H1 (cell line): ENCODE measurements at regions of chr6 and their contacts with region 1.

Region 1: GRCh38 chr6:16409531-16410441 is 171.4 kb downstream of the GMPR start:
- DNase-seq: peak; percentile 21 to 75
- H3K4me3 ChIP-seq: no peak overlapping the region
- H3K27ac ChIP-seq: no peak overlapping the region
- H3K4me1 ChIP-seq: peaks cover 0 to 2% (median 0%) of the 10 kb centered on the region in 4 experiments; a peak in 2 of 7 replicates
- H3K27me3 ChIP-seq: no peaks in the 10 kb centered on the region
- CTCF ChIP-seq: peak; percentile 80 to 89 (median 84)
- EP300 ChIP-seq: no peak
- POLR2A ChIP-seq: no peak
- RAD21 ChIP-seq: peak; percentile 65 to 74

Region 2: GRCh38 chr6:16420715-16421461 is 11.1 kb after region 1 on chr6:
- CTCF ChIA-PET with region 1: interaction called, 24 read pairs
- POLR2A ChIA-PET with region 1: no interaction called
- DNase-seq: no peak
- H3K4me3 ChIP-seq: no peak overlapping the region
- H3K27ac ChIP-seq: no peak overlapping the region
- H3K4me1 ChIP-seq: peaks cover 0 to 7% (median 2%) of the 10 kb centered on the region in 4 experiments; a peak in 2 of 7 replicates
- H3K27me3 ChIP-seq: no peaks in the 10 kb centered on the region
- CTCF ChIP-seq: no peak
- EP300 ChIP-seq: no peak
- POLR2A ChIP-seq: no peak
- RAD21 ChIP-seq: no peak

Region 3: DNA sequence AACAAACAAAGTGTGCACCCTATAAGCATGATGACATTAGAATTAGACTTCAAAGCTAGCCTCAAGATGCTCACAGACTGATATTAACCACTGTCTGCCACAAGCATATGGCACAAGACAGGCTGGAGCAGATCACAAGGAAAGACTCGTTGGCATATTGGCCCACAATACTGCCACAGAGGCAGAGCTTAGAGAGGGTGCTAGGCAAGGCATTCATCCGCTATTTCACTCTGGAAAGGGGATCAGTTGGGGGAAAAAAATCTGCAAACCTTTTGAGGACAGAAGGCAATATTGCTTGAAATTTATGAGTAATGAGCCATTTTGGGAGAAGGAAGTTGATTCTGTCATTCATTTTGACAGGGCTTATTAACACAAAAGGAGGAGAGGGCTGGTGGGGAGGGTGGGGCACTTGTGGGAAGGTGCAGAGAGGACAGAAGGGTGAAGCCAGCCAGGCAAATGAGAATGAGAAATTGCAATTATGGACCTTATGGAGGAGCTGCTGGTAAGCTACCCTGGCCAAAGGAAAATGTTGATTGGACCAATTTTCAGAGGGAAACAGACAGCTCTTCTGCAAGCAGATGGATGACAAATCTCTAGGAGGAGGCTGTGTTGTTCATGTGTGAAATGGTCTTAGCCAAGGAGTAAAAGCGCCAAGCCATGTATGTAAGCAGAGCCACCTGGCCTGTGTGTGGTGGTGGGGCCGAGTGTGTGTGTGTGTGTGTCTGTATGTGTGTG is 16.3 kb after region 1 on chr6:
- CTCF ChIA-PET with region 1: interaction called, 21 read pairs
- POLR2A ChIA-PET with region 1: no interaction called
- DNase-seq: no peak
- H3K4me3 ChIP-seq: no peak overlapping the region
- H3K27ac ChIP-seq: no peak overlapping the region
- H3K4me1 ChIP-seq: peaks cover 0 to 3% (median 0%) of the 10 kb centered on the region in 4 experiments; a peak in 2 of 7 replicates
- H3K27me3 ChIP-seq: no peaks in the 10 kb centered on the region
- CTCF ChIP-seq: no peak
- EP300 ChIP-seq: no peak
- POLR2A ChIP-seq: no peak
- RAD21 ChIP-seq: no peak